Sigmoid colon (tissue), 7 donors: ENCODE measurements at regions of chr12 and their contacts with region 1.

Region 1: DNA sequence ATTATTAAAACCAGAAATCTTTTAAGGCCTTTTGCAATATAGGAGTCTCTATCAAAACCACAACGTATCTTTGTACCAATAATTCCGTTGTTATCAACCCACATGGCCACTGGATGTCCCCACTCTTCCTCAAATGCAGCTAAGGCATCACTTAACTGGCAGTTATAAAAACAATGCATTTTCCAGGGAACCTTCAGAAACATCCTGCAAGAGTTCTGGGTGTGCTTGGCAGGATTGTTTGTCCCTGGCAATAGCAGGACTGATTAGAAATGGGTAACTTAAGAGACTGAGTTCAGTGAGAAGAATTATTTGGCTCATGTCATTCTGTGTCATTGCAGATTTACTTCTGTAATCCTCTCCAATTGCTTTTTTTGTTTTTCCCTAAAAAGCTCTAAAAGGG is 112.0 kb downstream of the SLC15A5 start:
- DNase-seq: peak; percentile 69
- H3K4me3 ChIP-seq: no peak overlapping the region
- H3K27ac ChIP-seq: no peak overlapping the region
- H3K4me1 ChIP-seq: peaks cover 0 to 13% (median 7%) of the 10 kb centered on the region in 4 donors
- H3K27me3 ChIP-seq: no peaks in the 10 kb centered on the region
- CTCF ChIP-seq: peak; percentile 25 to 47 (median 41)
- EP300 ChIP-seq: no peak
- POLR2A ChIP-seq: no peak

Region 2: DNA sequence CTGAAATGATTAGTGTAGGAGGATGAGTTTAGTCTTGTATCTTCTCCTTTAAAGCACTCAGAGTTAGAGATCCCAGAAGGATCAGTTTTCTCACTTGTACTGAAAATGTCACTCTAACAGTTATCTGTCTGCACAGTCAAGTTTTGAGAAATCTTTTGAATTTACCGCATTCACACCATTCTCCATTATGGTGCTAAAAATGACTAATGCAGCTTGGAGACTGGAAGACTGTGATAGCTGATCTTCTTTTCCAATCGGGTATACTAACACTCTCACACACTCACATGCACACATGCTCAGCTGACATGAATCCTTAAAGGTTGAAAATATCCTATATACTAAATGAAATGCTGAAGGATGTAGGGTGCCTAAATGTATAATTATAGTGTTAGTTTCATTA is 46.2 kb after region 1 on chr12:
- intact Hi-C with region 1: no loop called
- DNase-seq: no peak
- H3K4me3 ChIP-seq: no peak overlapping the region
- H3K27ac ChIP-seq: no peak overlapping the region
- H3K4me1 ChIP-seq: no peaks in the 10 kb centered on the region
- H3K27me3 ChIP-seq: no peaks in the 10 kb centered on the region
- CTCF ChIP-seq: no peak
- EP300 ChIP-seq: no peak
- POLR2A ChIP-seq: no peak

Region 3: GRCh38 chr12:16347391-16348298 is 182.1 kb after region 1 on chr12 and contains the start of gene MGST1:
- intact Hi-C with region 1: loop called (anchors 5 kb)
- DNase-seq: peak; percentile 80
- H3K4me3 ChIP-seq: peak within 1 kb of the TSS; percentile 31 to 50 (median 48)
- H3K27ac ChIP-seq: peak within 1 kb of the TSS; percentile 66 to 76 (median 73)
- H3K4me1 ChIP-seq: peaks cover 0 to 13% (median 0%) of the 10 kb centered on the region in 4 donors
- H3K27me3 ChIP-seq: no peaks in the 10 kb centered on the region
- CTCF ChIP-seq: no peak
- EP300 ChIP-seq: no peak
- POLR2A ChIP-seq: peak in 1 of 2 donors; percentile 34
- total RNA-seq, gene MGST1: 39.6 to 156 (median 85.0) TPM

Region 4: GRCh38 chr12:16359512-16360491 is 194.3 kb after region 1 on chr12:
- intact Hi-C with region 1: loop called (anchors 5 kb)
- DNase-seq: peak; percentile 71
- H3K4me3 ChIP-seq: no peak overlapping the region
- H3K27ac ChIP-seq: no peak overlapping the region
- H3K4me1 ChIP-seq: peaks cover 0 to 7% (median 2%) of the 10 kb centered on the region in 4 donors
- H3K27me3 ChIP-seq: no peaks in the 10 kb centered on the region
- CTCF ChIP-seq: peak; percentile 21 to 70 (median 56)
- EP300 ChIP-seq: no peak
- POLR2A ChIP-seq: no peak

Region 5: DNA sequence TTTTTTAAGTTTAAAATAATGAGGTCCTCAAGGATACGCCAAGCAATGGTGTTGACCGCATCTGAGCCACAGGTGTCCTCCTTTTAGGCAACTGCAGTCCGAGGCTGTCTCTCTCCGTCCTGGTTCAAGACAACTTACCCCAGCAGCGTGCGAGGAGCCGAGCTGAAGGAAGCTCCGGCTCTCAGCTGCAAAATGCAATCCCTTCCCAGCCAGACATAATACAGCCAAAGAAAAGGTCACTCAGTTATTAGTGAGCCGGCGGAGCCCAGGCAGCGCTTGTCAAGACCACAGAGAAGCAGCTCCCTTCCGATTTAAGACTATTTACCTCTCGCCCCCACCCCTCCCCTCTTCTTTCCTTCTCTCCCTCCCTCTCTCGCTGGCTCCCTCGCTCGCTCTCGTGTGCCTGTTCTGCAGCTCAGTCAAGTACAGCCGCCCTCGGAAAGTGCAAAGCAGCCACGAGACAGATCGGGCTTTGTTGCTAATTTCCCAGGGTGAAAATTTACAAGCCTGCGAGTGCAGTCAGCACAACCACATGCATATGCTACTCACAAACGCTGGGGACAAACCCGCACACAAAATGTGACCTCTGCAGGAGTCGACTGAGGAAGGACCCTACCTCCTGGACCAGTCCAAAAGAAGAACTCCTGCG is 440.8 kb after region 1 on chr12:
- intact Hi-C with region 1: loop called (anchors 10 kb)
- DNase-seq: peak; percentile 84
- H3K4me3 ChIP-seq: peak overlapping the region; percentile 50 to 67 (median 56)
- H3K27ac ChIP-seq: peak overlapping the region; percentile 84 to 91 (median 84)
- H3K4me1 ChIP-seq: peaks cover 0 to 18% (median 5%) of the 10 kb centered on the region in 4 donors
- H3K27me3 ChIP-seq: no peaks in the 10 kb centered on the region
- CTCF ChIP-seq: no peak
- EP300 ChIP-seq: no peak
- POLR2A ChIP-seq: peak in 1 of 2 donors; percentile 45

Region 6: DNA sequence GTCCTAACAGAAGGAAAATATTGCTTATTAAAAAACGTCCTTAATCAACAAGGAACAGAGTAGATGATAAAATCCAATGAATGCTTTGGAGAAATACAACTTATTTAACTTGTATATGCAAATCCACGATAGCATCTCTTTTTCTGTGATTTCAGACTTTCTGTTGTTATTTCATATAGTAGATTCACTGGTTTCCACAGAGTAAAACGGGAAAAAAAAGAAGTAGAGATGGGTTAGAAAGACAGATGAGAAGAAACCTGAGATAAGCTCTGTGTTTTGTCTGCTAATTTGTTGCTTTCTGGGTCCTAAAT is 1476.8 kb after region 1 on chr12:
- intact Hi-C with region 1: loop called (anchors 5 kb)
- DNase-seq: no peak
- H3K4me3 ChIP-seq: peak overlapping the region in 1 of 4 donors; percentile 41
- H3K27ac ChIP-seq: no peak overlapping the region
- H3K4me1 ChIP-seq: peaks cover 0 to 4% (median 0%) of the 10 kb centered on the region in 4 donors
- H3K27me3 ChIP-seq: no peaks in the 10 kb centered on the region
- CTCF ChIP-seq: no peak
- EP300 ChIP-seq: no peak
- POLR2A ChIP-seq: no peak